Right ventricle myocardium inferior (tissue), 1 donor: ENCODE measurements at regions of chr5 and their contacts with region 1.

Region 1: DNA sequence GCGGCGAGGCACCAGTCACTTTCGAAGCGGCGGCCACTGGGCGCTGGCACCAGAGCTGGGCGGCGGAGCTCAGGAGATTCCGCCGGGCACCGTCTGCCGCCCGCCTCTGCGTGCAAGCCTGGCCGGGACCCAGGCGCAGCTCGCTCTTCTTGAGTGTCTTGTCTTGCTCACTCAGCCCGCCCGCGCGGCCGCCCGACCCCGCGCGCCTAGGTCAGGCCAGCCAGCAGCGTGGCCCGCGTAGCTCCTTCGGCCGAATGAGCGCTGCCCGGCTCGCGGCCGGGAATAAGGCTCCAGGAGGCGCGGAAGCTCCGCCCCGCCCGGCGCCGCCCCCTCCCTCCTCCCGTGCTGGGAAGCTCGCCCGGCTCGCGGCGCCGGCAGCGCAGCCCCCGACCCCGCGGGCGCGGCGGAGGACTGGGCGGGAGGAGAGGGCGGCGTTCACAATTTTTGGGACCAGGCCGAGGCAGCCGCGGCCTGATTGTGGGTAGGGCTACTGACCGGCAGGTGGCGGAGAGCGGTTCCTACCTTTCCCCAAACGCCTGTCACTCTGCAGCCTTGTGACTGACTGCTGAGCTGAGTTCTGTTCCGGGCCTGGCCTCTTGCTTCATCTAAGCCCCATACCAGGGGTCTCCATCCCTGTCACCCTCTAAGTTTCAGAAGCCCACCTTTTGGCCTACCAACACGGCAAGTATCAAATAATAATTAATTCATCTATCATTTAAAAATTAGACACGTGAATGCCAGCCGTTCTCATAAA is at the start of gene HBEGF:
- DNase-seq: peak; percentile 90
- ATAC-seq: peak; percentile 87
- total RNA-seq, gene HBEGF: 20.2 TPM

Region 2: GRCh38 chr5:140174465-140175366 is 171.8 kb before region 1 on chr5 and contains the start of gene CYSTM1:
- intact Hi-C with region 1: loop called (anchors 5 kb)
- DNase-seq: peak; percentile 99
- ATAC-seq: peak; percentile 96
- total RNA-seq, gene CYSTM1: 67.0 TPM

Region 3: DNA sequence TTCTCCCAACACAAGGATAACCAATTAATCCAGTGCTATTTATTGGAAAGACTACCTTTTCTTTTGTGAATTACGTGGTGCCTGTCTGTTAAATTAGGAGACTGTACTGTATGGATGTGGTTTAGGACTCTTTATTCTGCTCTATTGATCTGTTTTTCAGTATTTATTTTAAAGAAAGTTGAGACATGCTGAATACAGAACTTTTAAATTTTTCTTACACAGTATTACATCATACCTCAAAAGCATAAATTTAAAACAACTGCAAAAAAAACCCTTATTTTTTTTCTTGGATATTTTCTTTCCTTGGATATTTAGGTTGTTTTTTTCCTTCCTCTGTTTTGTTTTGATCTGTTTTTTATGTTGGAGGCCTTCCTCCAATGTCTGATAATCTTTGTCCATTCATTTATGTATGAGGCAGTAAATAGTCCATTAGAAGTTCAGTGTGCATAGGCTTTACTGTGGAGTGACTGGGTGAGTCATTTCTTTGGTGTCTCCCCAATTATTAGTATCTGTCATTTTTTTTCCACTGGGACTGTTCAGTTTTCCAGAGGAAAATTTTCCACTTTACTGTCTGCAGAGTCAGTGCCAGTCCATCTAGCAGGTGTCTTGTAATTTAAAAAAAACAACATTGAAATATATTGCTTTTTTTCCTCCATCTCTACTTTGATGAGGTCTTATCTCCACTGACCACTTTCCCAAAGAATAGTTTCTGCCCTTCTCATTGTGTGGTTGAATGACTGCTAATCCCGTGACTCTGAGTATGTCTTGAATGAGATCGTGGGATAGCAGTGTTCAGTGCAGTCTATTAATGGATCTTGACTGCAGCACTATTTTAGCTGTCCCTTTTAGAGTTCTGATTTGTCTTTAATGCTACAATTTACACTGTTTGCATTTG is 156.3 kb before region 1 on chr5:
- intact Hi-C with region 1: no loop called
- DNase-seq: no peak
- ATAC-seq: peak; percentile 72

Region 4: DNA sequence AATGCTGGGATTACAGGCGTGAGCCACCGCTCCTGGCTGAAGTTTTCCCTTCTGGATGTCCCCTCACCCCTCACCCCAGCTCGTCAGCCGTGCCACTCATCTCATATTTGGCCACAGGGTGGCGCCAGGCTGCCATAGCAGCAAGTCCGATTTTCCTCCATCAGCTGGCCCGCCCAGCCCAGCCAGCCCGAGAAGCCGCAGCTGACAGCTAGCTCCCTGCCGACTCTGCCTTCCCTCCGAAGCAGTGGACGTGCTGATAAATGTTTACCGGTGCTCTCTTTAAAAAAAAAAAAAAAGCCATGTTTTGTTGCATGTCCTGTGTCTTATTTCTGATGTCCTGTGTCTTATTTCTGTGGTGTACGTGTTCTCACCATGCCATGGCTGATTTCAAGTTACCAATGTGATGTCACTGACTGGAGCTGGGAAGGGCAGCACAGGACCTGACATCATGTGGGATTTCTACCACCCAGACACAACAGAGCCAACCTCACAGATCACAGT is 102.0 kb before region 1 on chr5:
- intact Hi-C with region 1: loop called (anchors 1 kb)
- DNase-seq: peak; percentile 96
- ATAC-seq: peak; percentile 50

Region 5: DNA sequence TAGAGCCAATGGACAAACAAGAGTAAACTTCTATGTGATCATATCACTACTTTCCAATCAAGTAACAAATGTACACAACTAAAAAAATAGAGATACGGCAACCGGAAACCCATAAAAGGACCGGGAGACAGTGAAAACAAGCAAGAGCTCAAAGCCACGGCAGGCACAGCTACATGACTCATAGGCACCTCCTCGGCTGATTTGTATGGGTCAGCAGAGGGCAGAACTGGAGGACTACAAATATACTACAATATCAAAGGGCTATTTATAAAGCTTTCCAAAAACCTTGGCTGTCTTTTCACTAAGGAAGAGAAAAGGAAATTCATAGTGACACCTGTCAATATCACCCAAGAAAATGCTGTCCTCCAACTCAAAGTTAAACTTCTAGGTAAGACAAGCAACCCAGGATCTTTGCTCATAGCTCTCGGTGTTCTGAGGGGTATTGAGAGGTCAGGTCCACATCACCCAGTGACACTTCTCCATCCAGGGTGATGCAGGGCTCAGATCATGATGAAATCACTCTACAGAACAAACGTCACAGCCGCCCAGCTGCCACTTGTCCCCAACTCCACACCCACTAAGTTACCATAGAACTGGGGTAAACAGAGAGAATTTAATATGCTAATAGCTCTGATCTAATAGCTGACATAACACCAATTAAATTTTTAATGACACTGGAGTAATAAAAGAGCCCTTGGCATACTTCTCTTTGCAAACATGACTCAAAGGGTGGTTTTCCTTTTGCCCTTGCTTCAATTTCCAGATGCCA is 84.9 kb before region 1 on chr5:
- intact Hi-C with region 1: loop called (anchors 5 kb)
- DNase-seq: peak; percentile 83
- ATAC-seq: peak; percentile 95

Region 6: DNA sequence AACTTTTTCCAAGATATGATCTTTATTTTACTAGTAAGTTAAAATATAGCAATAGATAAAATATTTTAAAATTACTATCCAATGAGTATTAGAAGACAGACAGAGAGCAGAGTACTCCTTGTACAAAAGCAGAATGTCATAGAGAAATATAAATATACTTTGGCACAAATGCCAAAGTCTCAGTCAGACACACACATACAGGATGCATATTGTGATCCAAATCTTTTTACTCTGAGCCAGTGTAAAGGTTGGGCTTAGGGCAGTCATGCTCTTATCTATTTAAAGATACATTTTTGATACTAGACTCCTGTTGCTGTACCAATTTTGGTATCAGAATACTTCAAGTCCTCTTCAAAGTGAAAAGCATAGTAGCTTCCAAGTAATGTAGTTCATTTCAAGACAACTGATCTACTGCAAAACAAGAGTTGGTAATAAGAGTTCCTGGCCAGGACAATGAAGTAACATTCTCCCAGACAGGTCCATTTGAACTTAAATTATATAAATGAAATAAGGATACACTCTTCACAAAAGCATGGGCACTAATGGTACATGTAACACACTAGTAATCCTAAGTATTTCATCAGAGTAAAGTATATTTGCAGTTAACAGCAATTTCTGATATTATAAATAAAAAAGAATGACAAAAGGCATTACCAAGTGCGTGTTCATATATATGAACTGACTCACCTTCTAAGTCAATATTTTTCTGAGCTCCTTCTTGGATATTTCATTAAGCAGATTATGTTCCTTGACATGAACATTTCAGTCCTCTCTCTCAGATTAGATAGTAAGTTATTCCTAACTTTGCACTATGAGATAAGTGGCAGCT is 54.1 kb before region 1 on chr5:
- intact Hi-C with region 1: no loop called
- DNase-seq: no peak
- ATAC-seq: peak; percentile 40

Region 7: GRCh38 chr5:140302786-140303639 is 43.5 kb before region 1 on chr5 and contains the start of gene PFDN1:
- intact Hi-C with region 1: loop called (anchors 5 kb)
- DNase-seq: peak; percentile 97
- ATAC-seq: peak; percentile 99
- total RNA-seq, gene PFDN1: 80.6 TPM

Region 8: GRCh38 chr5:140488914-140489313 is 142.4 kb after region 1 on chr5:
- intact Hi-C with region 1: no loop called
- DNase-seq: no peak
- ATAC-seq: no peak